OCI-LY7 (cell line): ENCODE measurements at regions of chr1 and their contacts with region 1.

Region 1: DNA sequence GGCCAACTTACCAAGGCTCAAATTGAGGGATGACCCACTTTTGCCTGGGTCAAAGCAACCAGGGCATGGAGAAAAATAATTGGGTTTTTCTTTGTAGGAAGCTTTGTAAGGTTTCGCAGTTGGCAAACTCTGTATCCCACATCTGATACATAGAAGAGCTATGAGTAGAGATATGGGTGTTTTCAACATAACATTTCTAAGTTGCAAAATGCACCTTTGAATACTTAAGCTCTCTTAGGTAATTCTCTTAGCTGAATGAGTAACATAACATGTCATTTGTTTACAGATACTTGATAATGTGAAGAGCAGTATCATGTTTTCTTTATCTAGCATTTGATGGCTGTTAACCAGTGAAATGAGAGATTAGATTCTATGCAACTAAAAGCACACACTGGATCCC is 21.5 kb downstream of the RAVER2 start:
- DNase-seq: no peak
- H3K4me3 ChIP-seq: no peak overlapping the region
- H3K27ac ChIP-seq: no peak overlapping the region
- H3K4me1 ChIP-seq: no peaks in the 10 kb centered on the region
- CTCF ChIP-seq: no peak

Region 2: DNA sequence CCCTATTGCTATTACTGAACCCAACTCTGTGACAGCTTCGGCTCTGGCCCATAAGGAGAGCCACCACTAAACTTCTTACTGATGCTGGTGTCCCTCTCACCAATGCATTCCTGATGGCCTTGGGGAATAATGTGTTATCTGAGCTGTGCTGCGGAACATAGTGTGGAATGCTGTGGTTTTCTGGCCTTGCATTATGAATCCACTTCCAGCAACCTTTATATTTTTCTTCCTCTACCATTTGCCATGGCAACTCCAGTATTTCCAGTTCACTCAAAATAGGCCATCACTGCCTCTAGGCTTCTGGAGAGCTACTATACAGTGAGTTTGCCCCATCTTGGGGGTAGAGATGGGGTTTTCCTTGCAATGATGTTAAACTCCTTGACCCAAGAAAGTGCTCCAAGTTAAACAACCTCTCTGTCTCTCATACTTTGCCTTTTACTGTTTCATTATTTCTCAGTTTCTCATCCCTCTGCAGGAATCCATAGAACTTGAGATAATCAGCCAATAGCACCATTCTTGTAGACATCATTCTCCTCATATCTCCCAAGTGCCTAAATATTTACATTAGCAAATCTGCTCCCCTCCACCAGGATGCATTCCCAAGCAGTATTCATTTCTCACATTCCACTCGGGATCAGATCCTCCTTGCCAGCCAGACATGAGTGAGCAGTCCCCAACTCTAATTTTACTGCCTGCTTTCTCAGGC is 32.7 kb before region 1 on chr1:
- CTCF ChIA-PET with region 1: no interaction called
- POLR2A ChIA-PET with region 1: no interaction called
- intact Hi-C with region 1: loop called (anchors 1 kb)
- DNase-seq: no peak
- H3K4me3 ChIP-seq: no peak overlapping the region
- H3K27ac ChIP-seq: no peak overlapping the region
- H3K4me1 ChIP-seq: no peaks in the 10 kb centered on the region
- CTCF ChIP-seq: no peak

Region 3: DNA sequence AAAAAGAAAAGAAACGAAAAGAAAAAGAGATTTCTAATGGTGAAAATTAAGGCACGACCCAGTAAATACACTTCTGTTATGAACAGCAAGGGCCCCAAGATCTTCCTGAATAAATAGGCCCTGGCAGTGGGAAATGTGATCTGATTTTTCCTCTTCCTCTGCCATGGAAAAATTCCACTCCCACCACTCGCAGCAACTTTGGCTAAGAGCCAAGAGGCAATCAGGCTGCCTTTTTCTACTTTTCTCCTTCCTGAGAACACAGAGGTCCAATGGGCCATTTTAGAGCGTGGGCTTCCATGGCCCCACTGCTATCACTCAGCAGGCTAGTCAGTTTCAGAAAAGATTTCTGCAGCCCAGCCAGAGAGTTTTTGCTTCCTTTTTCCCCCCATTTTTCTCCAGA is 347.9 kb after region 1 on chr1:
- CTCF ChIA-PET with region 1: no interaction called
- POLR2A ChIA-PET with region 1: no interaction called
- intact Hi-C with region 1: no loop called
- DNase-seq: no peak
- H3K4me3 ChIP-seq: no peak overlapping the region
- H3K27ac ChIP-seq: no peak overlapping the region
- H3K4me1 ChIP-seq: no peaks in the 10 kb centered on the region
- CTCF ChIP-seq: no peak